ENCODE measurements at regions of chr5 and their contacts with region 1.

Region 1: DNA sequence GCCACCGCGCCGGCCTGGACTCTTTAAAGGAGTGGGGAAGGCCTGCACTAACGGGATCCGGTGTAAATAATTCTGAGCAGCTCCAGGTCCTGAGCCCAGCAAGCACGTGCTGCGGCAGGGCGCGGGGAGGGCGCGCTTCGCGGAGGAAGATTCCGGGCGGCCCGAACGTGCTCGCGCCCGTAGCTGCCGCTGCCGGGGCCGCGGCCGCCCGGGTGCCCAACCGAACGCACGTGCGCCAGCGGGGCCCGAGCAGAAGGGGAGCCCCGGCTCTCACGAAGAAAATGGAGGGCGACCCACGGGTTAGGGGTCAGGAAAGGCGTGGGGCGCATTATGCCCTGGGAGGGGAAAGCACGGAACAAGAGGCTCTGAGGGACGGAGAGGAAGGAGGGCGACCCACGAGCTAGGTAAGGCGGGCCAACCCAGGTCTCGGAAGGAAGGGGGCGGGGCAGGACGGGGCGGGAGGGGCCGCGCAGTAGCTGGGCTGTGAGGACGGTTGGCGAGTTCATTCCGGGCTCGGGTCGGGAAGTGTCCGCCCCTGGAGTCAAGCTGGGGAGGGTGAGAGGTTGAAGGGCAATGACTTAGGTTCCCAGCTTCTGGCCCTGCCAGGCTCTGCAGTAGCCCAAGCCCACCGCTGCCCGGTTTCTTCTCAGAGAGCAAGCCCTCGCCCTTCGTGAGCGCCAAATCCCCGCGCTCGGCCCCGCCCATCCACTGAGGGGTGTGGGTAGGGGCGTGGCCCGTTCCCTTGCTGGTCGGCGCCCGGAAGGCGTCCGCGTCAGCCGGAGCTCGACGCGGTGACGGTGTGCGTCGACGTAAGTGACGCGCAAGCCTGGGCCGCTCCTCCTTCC is at the start of gene ZNF131:
- DNase-seq: peak; percentile 86 to 98
- ATAC-seq: peak; percentile 94 to 95
- H3K4me3 ChIP-seq: peak within 1 kb of the TSS; percentile 78
- H3K27ac ChIP-seq: peak within 1 kb of the TSS; percentile 96 to 97
- H3K4me1 ChIP-seq: peaks cover 20% of the 10 kb centered on the region; the same call in 2 of the 3 replicates
- CTCF ChIP-seq: no peak
- EP300 ChIP-seq: no peak
- POLR2A ChIP-seq: peak; percentile 80
- RAD21 ChIP-seq: no peak
- polyA plus RNA-seq, gene ZNF131: 37.5 and 47.9 TPM in 2 replicates

Region 2: DNA sequence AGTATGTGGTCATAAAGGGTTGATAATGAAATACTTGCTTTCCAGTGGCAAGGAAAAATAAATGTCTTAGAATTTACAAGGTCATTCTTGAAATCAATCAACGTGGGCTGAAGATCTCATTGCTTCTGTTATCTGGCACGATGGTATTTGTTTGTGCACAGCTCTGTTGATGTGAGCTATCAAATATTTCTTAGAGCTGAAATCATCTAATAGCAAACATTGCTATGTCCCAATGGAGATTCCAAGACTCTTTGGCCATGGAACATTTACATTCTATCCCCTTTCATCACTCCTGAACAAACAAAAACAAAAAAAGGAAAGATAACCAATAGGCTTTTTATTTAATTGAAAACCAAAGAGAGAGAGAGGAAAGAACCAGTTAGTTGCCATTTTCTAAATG is 475.8 kb before region 1 on chr5:
- CTCF ChIA-PET with region 1: no interaction called
- POLR2A ChIA-PET with region 1: no interaction called
- DNase-seq: no peak
- ATAC-seq: no peak
- H3K4me3 ChIP-seq: no peak overlapping the region
- H3K27ac ChIP-seq: no peak overlapping the region
- H3K4me1 ChIP-seq: no peaks in the 10 kb centered on the region
- CTCF ChIP-seq: no peak
- EP300 ChIP-seq: no peak
- POLR2A ChIP-seq: no peak
- RAD21 ChIP-seq: no peak

Region 3: DNA sequence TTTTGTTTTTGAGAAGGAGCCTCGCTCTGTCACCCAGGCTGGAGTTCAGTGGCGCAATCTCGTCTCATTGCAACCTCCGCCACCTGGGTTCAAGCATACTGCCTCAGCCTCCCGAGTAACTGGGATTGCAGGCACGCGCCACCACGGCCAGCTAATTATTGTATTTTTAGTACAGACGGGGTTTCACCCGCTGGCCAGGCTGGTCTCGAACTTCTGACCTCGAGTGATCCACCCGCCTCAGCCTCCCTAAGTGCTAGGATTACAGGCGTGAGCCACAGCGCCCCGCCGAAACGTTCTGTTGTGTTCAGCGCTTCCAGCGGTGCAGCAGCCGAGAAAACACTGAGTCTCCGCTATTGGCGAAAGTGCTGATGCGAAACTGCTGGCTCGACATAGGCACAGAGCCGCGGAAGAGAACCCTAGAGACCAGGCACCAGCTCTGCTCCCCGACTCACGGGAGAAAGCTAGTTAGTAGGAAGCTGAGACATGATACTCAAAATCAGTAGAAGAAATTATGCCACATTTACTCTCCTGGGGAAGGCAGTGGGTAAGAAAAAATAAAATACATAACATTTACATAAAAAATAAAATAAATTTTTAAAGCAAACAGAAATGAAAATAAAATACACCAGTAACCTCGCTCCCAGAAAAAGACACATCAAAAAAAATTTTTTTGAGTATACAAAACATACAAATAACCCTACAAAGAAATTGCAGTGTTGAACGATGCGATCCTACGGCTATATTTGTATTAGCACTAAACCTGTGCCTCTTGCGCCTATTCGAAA is 112.4 kb before region 1 on chr5:
- CTCF ChIA-PET with region 1: interaction called, 5 read pairs
- POLR2A ChIA-PET with region 1: interaction called, 10 read pairs
- DNase-seq: peak; percentile 84 to 98
- ATAC-seq: peak; percentile 81 to 85
- H3K4me3 ChIP-seq: peak overlapping the region; percentile 56
- H3K27ac ChIP-seq: peak overlapping the region; percentile 93 to 95
- H3K4me1 ChIP-seq: peaks cover 13% of the 10 kb centered on the region
- CTCF ChIP-seq: peak; percentile 34
- EP300 ChIP-seq: no peak
- POLR2A ChIP-seq: peak; percentile 64
- RAD21 ChIP-seq: peak in 1 of 2 experiments; percentile 34; a peak in 3 of 5 replicates

Region 4: GRCh38 chr5:43040287-43041098 is 80.4 kb before region 1 on chr5 and contains the start of gene ANXA2R:
- CTCF ChIA-PET with region 1: interaction called, 5 read pairs
- POLR2A ChIA-PET with region 1: interaction called, 16 read pairs
- DNase-seq: peak; percentile 67 to 97
- ATAC-seq: peak; percentile 41 to 71
- H3K4me3 ChIP-seq: peak within 1 kb of the TSS; percentile 50
- H3K27ac ChIP-seq: peak within 1 kb of the TSS; percentile 85 to 93
- H3K4me1 ChIP-seq: peaks cover 6% of the 10 kb centered on the region; the same call in 2 of the 3 replicates
- CTCF ChIP-seq: peak; percentile 53
- EP300 ChIP-seq: no peak
- POLR2A ChIP-seq: no peak
- RAD21 ChIP-seq: peak; percentile 68 to 81
- polyA plus RNA-seq, gene ANXA2R: 1.7 and 1.8 TPM in 2 replicates

Region 5: GRCh38 chr5:43078986-43079355 is 42.0 kb before region 1 on chr5:
- CTCF ChIA-PET with region 1: no interaction called
- POLR2A ChIA-PET with region 1: no interaction called
- DNase-seq: peak in 1 of 2 experiments; percentile 39
- ATAC-seq: peak; percentile 68 to 78
- H3K4me3 ChIP-seq: no peak overlapping the region
- H3K27ac ChIP-seq: no peak overlapping the region
- H3K4me1 ChIP-seq: peaks cover 8% of the 10 kb centered on the region
- CTCF ChIP-seq: no peak
- EP300 ChIP-seq: no peak
- POLR2A ChIP-seq: no peak
- RAD21 ChIP-seq: no peak

Region 6: DNA sequence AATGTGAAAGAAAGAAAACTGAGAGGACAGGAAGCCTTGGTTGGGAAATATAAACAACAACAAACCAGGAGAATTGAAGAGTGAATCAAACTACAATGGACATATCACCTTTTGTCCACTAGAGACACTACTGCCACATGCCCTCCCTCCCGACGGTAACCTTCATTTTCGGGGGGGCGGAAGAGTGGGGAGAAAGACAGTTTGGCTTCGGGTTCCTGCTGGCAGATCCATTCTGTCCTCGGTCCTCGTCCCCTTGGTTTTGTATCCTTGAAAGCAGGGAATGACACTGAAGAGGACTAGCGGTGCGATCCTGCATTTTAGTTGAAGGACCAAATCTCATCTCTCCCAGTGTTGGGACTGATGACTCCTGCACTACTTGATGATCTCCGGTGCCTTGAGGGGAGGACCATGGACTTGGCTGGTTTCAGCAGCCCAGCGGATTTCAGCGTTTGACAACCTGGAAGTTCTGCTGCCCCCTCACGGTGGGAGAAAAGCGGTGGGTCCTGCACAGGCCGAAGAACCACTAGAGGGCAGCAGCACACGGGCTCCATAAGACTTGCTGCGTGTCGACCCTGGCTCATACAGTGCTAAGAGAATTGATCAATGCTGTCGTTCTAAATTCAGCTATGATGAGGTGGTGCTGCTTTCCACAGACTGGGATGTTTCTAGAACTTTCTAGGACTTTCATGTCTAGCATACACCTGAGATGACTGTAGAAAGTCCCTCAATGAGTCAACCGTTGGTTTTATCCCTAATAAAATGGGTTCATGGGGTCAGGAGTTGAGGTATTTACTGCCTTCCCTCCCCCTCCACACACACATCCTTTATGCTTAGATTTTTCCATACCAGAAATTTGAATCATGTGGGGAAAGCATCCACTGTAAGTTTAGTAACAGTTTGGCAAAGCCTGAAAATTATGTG is 15.3 kb before region 1 on chr5:
- CTCF ChIA-PET with region 1: interaction called, 101 read pairs
- POLR2A ChIA-PET with region 1: interaction called, 6 read pairs
- DNase-seq: peak; percentile 80 to 98
- ATAC-seq: peak; percentile 96 to 98
- H3K4me3 ChIP-seq: peak overlapping the region; percentile 50
- H3K27ac ChIP-seq: peak overlapping the region; percentile 75 to 82
- H3K4me1 ChIP-seq: 0 out of 3 replicates have a peak, but pooled peaks cover 3% of the 10 kb centered on the region
- CTCF ChIP-seq: peak; percentile 100
- EP300 ChIP-seq: no peak
- POLR2A ChIP-seq: no peak
- RAD21 ChIP-seq: peak; percentile 83 to 84

Region 7: DNA sequence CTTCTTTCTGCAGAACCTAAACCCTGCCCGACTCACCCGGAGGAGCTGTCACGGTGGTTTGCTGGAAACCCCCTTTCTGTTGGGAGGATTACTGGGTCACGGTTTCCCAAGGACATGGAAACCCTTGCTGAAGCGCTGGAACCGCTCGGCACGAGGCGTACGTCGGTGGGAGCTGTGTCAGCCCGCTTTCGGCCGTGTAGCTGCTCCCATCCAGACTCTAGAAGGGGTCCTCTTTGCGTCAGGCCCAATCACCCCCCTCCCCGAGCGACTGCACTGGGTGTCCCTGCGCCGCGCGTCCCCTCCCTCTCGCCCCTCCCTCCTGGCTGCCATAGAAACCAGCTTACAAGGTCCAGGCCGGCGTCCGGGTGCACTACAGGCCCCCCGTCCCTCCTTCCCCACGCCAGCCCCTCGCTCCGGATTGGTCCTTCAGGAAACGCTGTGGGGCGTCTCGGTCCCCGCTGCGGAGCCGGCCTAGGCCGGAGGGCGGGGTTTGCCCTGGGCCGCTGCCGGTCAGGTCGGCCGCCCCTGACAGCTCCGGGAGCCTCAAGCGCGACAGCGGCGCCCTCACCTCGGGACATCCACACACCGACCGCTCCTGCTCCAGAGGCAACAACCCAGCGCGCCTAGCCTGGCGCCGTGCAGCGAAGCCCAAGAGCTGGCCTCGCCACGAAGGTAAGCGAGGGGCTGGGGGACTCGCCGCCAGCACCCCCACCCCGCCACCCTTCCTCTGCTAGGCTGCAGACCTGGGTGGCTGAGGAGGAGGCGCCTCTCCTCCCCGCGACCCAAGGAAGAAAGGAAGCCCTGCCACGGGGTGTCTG is 71.0 kb after region 1 on chr5 and contains the start of gene NIM1K:
- CTCF ChIA-PET with region 1: interaction called, 3 read pairs
- POLR2A ChIA-PET with region 1: interaction called, 21 read pairs
- DNase-seq: peak; percentile 32 to 38
- ATAC-seq: peak; percentile 77 to 87
- H3K4me3 ChIP-seq: peak within 1 kb of the TSS; percentile 61
- H3K27ac ChIP-seq: peak within 1 kb of the TSS; percentile 23 to 71; a peak in 5 of 6 replicates
- H3K4me1 ChIP-seq: peaks cover 6% of the 10 kb centered on the region
- CTCF ChIP-seq: no peak
- EP300 ChIP-seq: no peak
- POLR2A ChIP-seq: no peak
- RAD21 ChIP-seq: no peak
- polyA plus RNA-seq, gene NIM1K: 0.23 and 0.26 TPM in 2 replicates

Region 8: DNA sequence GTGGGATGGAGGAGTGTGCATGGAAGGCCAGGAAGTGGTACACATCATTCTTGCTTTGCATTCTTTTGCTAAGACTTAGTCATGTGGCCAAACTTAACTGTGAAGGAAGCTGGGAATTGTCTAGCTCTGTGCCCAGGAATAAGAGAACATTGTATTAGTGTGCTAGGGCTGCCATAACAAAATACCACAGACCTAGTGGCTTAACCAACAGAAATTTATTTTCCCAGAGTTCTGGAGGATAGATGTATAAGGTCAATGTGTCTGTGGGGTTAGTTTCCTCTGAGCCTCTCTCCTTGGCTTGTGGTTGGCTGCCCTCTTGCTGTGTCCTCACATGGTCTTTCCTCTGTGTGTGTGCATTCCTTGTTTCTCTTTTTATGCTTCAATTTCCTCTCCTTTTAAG is 514.4 kb after region 1 on chr5:
- CTCF ChIA-PET with region 1: no interaction called
- POLR2A ChIA-PET with region 1: no interaction called
- DNase-seq: no peak
- ATAC-seq: no peak
- H3K4me3 ChIP-seq: no peak overlapping the region
- H3K27ac ChIP-seq: no peak overlapping the region
- H3K4me1 ChIP-seq: no peaks in the 10 kb centered on the region
- CTCF ChIP-seq: no peak
- EP300 ChIP-seq: no peak
- POLR2A ChIP-seq: no peak
- RAD21 ChIP-seq: no peak